Activated T-helper 1 cell treated with anti-CD3 and anti-CD28 coated beads, Interleukin-12 subunit alpha, Interleukin-12 subunit beta, Interleukin-2, Interleukin-4 antibody, amounts not matched to agents 30 ng/mL and 10 ng/mL and 1 ng/mL, durations not matched to agents 14 hours and 24 hours and 36 hours (primary cell): ENCODE measurements at regions of chr3 and their contacts with region 1.

Region 1: DNA sequence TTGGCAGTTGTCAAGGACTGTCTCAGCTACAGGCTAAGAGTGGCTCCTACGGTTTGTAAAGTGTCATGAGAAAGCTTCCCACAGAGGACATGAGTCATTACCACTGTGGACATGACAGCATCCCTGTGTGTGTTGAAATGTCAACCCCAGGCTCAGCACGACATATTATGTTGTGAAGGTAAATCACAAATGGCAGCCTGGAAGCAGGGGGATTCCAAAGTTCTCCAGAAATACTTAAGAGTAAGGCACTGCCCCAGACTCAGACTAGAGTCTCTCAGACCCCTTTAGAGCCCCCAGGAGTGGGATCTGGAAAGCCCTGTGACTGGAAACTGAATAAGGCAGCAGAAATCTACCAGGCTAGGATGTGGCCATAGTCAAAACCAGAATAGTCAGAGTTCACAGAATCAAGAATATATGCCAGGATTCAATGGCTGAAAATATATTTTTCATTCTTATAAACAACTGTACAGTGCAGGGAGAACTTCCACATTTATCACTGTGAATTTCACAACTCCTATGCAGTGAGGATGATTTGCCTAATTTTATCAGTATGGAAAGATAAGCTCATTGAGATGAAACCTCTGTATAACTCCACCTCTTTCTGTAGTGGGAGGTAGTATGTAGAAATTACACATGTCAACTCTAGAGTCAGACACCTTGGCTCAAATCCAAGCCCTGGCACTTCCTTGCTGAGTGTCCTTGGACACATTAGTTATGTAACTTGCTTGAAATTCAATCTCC is 237.1 kb upstream of the CFAP20DC start:
- DNase-seq: peak; percentile 29
- H3K4me3 Mint-ChIP-seq: peak overlapping the region; percentile 1
- H3K27ac Mint-ChIP-seq: peak overlapping the region; percentile 91
- H3K4me1 Mint-ChIP-seq: peaks cover 37% of the 10 kb centered on the region
- H3K27me3 Mint-ChIP-seq: no peaks in the 10 kb centered on the region

Region 2: DNA sequence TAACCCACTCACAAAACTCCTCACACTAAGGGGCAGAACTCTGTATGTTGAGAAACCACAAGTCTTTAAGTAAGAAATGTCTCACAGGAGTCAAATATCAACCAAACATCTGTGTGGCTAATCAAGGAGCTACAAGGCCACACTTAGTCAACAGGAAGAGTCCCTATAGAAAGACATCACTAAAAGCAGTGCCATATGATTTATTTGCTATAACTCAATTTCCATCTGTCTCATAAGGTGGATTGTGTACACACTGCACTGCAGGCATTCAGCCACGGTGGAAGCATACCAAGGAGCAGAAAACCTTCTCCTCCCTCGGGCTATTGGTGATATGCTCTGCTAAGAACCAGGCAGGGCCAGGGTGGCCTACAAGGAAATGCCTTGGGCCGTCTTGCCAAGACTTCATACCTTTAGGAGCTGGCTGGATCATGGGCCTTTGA is 39.5 kb before region 1 on chr3:
- intact Hi-C with region 1: loop called (anchors 1 kb)
- DNase-seq: no peak
- H3K4me3 Mint-ChIP-seq: no peak overlapping the region
- H3K27ac Mint-ChIP-seq: peak overlapping the region; percentile 44
- H3K4me1 Mint-ChIP-seq: peaks cover 9% of the 10 kb centered on the region
- H3K27me3 Mint-ChIP-seq: peaks cover 4% of the 10 kb centered on the region

Region 3: DNA sequence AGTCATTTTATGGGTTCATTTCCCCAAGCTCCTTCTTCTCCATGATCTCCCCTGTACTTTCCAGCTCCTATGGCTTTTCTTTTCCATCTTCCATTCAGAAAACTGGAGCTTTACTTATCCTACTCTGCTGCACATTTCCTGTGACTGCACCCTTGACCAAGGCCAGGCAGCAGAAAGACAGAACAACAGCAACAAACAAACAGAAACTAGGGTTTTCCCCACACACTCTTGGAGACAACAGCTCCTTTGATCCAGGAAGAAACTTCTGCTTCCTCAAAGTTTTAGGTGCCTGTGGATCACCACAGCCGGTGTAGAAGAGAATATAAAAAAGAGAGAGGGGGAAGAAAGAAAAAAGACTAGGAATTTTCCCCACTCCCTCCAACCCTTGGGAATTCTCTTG is 105.2 kb after region 1 on chr3:
- intact Hi-C with region 1: no loop called
- DNase-seq: no peak
- H3K4me3 Mint-ChIP-seq: peak overlapping the region; percentile 67
- H3K27ac Mint-ChIP-seq: peak overlapping the region; percentile 87
- H3K4me1 Mint-ChIP-seq: peaks cover 62% of the 10 kb centered on the region
- H3K27me3 Mint-ChIP-seq: no peaks in the 10 kb centered on the region

Region 4: GRCh38 chr3:59514865-59515482 is 228.0 kb after region 1 on chr3:
- intact Hi-C with region 1: no loop called
- DNase-seq: no peak
- H3K4me3 Mint-ChIP-seq: no peak overlapping the region
- H3K27ac Mint-ChIP-seq: no peak overlapping the region
- H3K4me1 Mint-ChIP-seq: no peaks in the 10 kb centered on the region
- H3K27me3 Mint-ChIP-seq: peaks cover 8% of the 10 kb centered on the region

Region 5: DNA sequence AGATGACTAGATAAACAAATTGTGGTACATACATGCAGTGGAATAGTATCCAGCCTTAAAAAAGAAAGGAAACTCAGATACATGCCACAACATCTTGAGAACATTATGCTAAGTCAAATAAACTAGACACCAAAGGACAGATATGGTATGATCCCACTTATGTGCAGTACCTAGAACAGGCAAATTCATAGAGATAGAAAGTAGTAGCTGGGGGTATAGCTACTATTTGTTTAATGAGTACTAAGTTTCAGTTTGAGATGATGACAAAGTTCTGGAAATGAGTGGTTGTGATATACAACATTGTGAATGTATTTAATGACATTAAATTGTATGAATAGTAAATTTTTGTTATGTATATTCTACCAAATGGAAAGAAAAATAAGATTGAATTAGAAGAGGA is 240.0 kb after region 1 on chr3:
- intact Hi-C with region 1: loop called (anchors 1 kb)
- DNase-seq: no peak
- H3K4me3 Mint-ChIP-seq: no peak overlapping the region
- H3K27ac Mint-ChIP-seq: peak overlapping the region; percentile 19
- H3K4me1 Mint-ChIP-seq: peaks cover 9% of the 10 kb centered on the region
- H3K27me3 Mint-ChIP-seq: no peaks in the 10 kb centered on the region

Region 6: GRCh38 chr3:59704292-59704691 is 417.3 kb after region 1 on chr3:
- intact Hi-C with region 1: no loop called
- DNase-seq: no peak
- H3K4me3 Mint-ChIP-seq: no peak overlapping the region
- H3K27ac Mint-ChIP-seq: no peak overlapping the region
- H3K4me1 Mint-ChIP-seq: no peaks in the 10 kb centered on the region
- H3K27me3 Mint-ChIP-seq: no peaks in the 10 kb centered on the region

Region 7: GRCh38 chr3:59759298-59760031 is 472.5 kb after region 1 on chr3:
- intact Hi-C with region 1: loop called (anchors 10 kb)
- DNase-seq: no peak
- H3K4me3 Mint-ChIP-seq: peak overlapping the region; percentile 32
- H3K27ac Mint-ChIP-seq: no peak overlapping the region
- H3K4me1 Mint-ChIP-seq: peaks cover 67% of the 10 kb centered on the region
- H3K27me3 Mint-ChIP-seq: no peaks in the 10 kb centered on the region